CD14-positive monocyte (primary cell): ENCODE measurements at regions of chr5 and their contacts with region 1.

Region 1: DNA sequence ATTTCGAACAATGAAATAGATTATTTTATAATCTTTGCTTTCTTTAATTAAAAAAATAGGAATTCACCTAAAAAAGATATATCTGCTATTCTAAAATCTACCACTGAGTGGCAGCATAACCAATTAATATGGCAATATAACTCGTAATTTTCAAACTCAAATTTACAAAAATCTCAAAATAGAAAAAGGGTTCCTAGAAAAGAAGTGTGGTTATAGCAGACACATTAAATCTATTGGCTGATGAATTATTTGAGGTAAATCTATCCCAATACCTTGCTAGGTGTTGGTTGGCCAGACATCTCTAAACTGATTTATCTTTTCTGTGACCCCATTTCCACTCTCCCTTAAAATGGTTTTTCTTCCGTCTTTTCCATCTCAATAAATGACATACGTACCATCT is 30.2 kb upstream of the NRG2 start:
- DNase-seq: peak; percentile 3 to 45 (median 6)
- H3K4me3 ChIP-seq: no peak overlapping the region
- H3K4me3 Mint-ChIP-seq: no peak overlapping the region
- H3K27ac ChIP-seq: no peak overlapping the region
- H3K27ac Mint-ChIP-seq: no peak overlapping the region
- H3K4me1 ChIP-seq: no peaks in the 10 kb centered on the region
- H3K4me1 Mint-ChIP-seq: no peaks in the 10 kb centered on the region
- H3K27me3 ChIP-seq: peaks cover 18 to 41% of the 10 kb centered on the region in 2 donors
- H3K27me3 Mint-ChIP-seq: peaks cover 13 to 48% (median 26%) of the 10 kb centered on the region in 3 donors
- CTCF ChIP-seq: peak; percentile 80

Region 2: DNA sequence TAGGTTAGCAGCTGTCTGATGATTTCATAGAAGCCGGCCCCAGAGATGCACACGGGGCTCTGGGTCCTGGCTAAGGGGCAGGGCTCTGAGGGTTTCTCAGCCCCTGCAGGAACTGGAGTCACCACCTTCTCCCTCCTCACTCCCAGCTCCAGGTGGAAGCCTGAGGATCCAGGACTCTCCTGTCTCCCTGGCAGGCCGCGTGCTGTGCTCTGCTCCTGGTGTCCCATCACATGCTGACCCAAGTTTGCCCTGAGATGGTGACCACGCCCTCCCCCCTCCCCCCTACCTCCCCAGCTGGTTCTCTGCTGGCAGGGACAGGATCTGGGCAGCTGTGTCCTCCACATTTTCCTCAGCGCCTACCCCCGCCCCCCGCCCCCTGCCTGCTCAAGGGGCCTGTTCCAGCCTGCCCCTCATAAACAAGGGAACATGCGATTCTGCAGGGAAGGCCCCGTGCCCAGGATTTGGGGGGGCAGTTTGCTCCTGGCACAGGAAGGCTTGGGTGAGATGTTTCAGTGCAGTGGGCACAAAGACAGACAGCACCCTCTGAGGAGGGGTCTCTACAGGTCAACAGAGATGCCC is 190.2 kb before region 1 on chr5:
- intact Hi-C with region 1: no loop called
- DNase-seq: no peak
- H3K4me3 ChIP-seq: no peak overlapping the region
- H3K4me3 Mint-ChIP-seq: no peak overlapping the region
- H3K27ac ChIP-seq: no peak overlapping the region
- H3K27ac Mint-ChIP-seq: peak overlapping the region in 1 of 7 donors; percentile 28
- H3K4me1 ChIP-seq: no peaks in the 10 kb centered on the region
- H3K4me1 Mint-ChIP-seq: no peaks in the 10 kb centered on the region
- H3K27me3 ChIP-seq: no peaks in the 10 kb centered on the region
- H3K27me3 Mint-ChIP-seq: peaks cover 7 to 14% (median 8%) of the 10 kb centered on the region in 3 donors
- CTCF ChIP-seq: no peak

Region 3: DNA sequence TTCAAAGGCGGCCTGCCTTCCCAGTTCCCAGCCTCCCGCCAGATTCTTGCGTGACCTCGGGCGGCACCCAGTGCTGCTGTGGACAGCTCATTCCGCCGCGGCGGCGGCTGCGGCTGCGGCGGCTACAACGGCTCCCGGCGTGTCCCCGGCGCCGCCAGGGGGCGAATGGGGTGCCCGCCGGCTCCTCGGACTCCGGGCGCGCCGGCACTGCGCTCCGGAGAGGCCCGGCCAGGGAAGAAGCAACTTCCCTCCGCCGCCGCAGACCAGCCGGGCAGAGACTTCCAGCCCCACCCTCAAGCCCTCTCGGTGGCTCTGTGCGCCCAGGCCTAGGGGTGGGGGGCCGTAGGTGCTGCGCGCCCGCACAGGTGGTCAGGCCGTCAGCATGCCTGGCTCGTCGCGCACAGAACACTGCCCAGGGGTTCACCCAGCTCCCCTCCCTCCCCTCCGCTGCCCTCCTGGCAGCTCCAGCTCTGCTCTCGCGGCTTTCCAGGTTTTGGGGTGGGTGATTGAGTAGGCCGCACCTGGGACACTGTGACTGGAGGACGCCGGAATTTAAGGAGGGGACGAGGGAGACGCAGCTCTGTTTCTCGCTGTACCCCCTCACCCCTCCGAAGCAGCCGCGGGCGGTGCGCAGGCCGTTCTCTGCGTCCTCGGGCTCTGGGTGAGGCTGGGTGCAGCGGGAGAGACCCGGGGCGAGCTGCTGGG is 72.7 kb after region 1 on chr5:
- intact Hi-C with region 1: loop called (anchors 5 kb)
- DNase-seq: peak; percentile 69 to 81 (median 78)
- H3K4me3 ChIP-seq: peak overlapping the region; percentile 17 to 72 (median 25)
- H3K4me3 Mint-ChIP-seq: peak overlapping the region; percentile 68 to 86
- H3K27ac ChIP-seq: no peak overlapping the region
- H3K27ac Mint-ChIP-seq: no peak overlapping the region
- H3K4me1 ChIP-seq: peaks cover 15 to 20% of the 10 kb centered on the region in 2 donors
- H3K4me1 Mint-ChIP-seq: peaks cover 28% of the 10 kb centered on the region
- H3K27me3 ChIP-seq: peaks cover 25 to 39% of the 10 kb centered on the region in 2 donors
- H3K27me3 Mint-ChIP-seq: peaks cover 31 to 48% (median 47%) of the 10 kb centered on the region in 3 donors
- CTCF ChIP-seq: peak; percentile 80

Region 4: GRCh38 chr5:140157032-140157803 is 83.9 kb after region 1 on chr5:
- intact Hi-C with region 1: loop called (anchors 2 to 5 kb)
- DNase-seq: peak; percentile 75 to 84 (median 83)
- H3K4me3 ChIP-seq: peak overlapping the region in 1 of 3 experiments; percentile 57
- H3K4me3 Mint-ChIP-seq: peak overlapping the region; percentile 45 to 77
- H3K27ac ChIP-seq: no peak overlapping the region
- H3K27ac Mint-ChIP-seq: peak overlapping the region in 1 of 7 donors; percentile 18
- H3K4me1 ChIP-seq: peaks cover 6 to 24% of the 10 kb centered on the region in 2 donors
- H3K4me1 Mint-ChIP-seq: peaks cover 22% of the 10 kb centered on the region
- H3K27me3 ChIP-seq: peaks cover 0 to 3% of the 10 kb centered on the region in 2 donors
- H3K27me3 Mint-ChIP-seq: peaks cover 11 to 28% (median 13%) of the 10 kb centered on the region in 3 donors
- CTCF ChIP-seq: peak; percentile 86

Region 5: GRCh38 chr5:140564196-140565023 is 491.1 kb after region 1 on chr5 and contains the starts of genes APBB3 and SLC35A4:
- intact Hi-C with region 1: no loop called
- DNase-seq: peak; percentile 99 to 100 (median 100)
- H3K4me3 ChIP-seq: peak within 1 kb of the TSS; percentile 77 to 87 (median 83)
- H3K4me3 Mint-ChIP-seq: peak within 1 kb of the TSS; percentile 91 to 98
- H3K27ac ChIP-seq: peak within 1 kb of the TSS; percentile 92
- H3K27ac Mint-ChIP-seq: peak within 1 kb of the TSS; percentile 97 to 99 (median 98)
- H3K4me1 ChIP-seq: peaks cover 33 to 65% of the 10 kb centered on the region in 2 donors
- H3K4me1 Mint-ChIP-seq: peaks cover 58% of the 10 kb centered on the region
- H3K27me3 ChIP-seq: no peaks in the 10 kb centered on the region
- H3K27me3 Mint-ChIP-seq: peaks cover 0 to 2% (median 2%) of the 10 kb centered on the region in 3 donors
- CTCF ChIP-seq: no peak
- polyA plus RNA-seq, gene APBB3: 4.9 to 211 (median 7.4) TPM
- polyA plus RNA-seq, gene SLC35A4: 44.0 to 67.1 (median 58.8) TPM